ENCODE measurements at regions of chr4 and their contacts with region 1.

Region 1: GRCh38 chr4:10164877-10165283 is 48.3 kb upstream of the WDR1 start:
- DNase-seq: no peak
- ATAC-seq: no peak
- H3K4me3 ChIP-seq: no peak overlapping the region
- H3K4me3 Mint-ChIP-seq: no peak overlapping the region
- H3K27ac ChIP-seq: no peak overlapping the region
- H3K27ac Mint-ChIP-seq: peak overlapping the region in 1 of 9 donors; percentile 62
- H3K4me1 ChIP-seq: peaks cover 8 to 30% of the 10 kb centered on the region in 2 donors
- H3K4me1 Mint-ChIP-seq: peaks cover 14 to 41% (median 32%) of the 10 kb centered on the region in 7 donors
- H3K27me3 ChIP-seq: no peaks in the 10 kb centered on the region
- H3K27me3 Mint-ChIP-seq: no peaks in the 10 kb centered on the region

Region 2: DNA sequence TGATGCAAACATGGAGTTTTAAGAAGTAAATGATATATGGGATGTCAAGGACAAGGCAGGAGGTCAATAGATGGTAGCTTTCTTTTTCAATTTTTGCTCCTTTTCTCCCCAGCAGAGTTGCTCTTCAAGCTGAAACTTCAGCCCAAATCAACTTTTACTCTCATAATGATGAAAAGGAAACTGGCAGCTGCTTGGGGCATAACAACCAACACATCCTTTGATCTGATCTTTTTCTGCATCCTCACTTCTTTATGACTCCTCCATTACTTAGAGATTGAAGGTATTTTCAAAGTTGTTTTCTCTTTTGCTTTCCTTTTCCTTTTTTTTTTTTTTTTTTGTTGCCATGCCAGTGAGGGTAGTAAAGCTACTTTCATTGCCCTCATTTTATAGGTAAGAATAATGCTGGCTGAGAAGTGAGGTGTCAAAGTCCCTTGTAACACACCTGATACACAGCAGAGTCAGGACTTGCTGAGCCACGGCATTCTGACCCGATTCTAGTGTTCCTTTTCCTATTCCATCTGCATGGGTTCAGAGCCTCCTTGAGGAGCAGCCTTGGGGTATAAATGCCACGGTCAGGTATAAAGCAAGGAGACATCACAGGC is 170.5 kb before region 1 on chr4:
- CTCF ChIA-PET with region 1: no interaction called
- POLR2A ChIA-PET with region 1: no interaction called
- intact Hi-C with region 1: no loop called
- DNase-seq: peak in 5 of 9 donors; percentile 3 to 48 (median 23)
- ATAC-seq: peak; percentile 31
- H3K4me3 ChIP-seq: no peak overlapping the region
- H3K4me3 Mint-ChIP-seq: peak overlapping the region in 1 of 10 donors; percentile 4
- H3K27ac ChIP-seq: no peak overlapping the region
- H3K27ac Mint-ChIP-seq: peak overlapping the region in 5 of 9 donors; percentile 29 to 72 (median 59)
- H3K4me1 ChIP-seq: no peaks in the 10 kb centered on the region
- H3K4me1 Mint-ChIP-seq: peaks cover 8 to 38% (median 11%) of the 10 kb centered on the region in 7 donors
- H3K27me3 ChIP-seq: no peaks in the 10 kb centered on the region
- H3K27me3 Mint-ChIP-seq: no peaks in the 10 kb centered on the region

Region 3: DNA sequence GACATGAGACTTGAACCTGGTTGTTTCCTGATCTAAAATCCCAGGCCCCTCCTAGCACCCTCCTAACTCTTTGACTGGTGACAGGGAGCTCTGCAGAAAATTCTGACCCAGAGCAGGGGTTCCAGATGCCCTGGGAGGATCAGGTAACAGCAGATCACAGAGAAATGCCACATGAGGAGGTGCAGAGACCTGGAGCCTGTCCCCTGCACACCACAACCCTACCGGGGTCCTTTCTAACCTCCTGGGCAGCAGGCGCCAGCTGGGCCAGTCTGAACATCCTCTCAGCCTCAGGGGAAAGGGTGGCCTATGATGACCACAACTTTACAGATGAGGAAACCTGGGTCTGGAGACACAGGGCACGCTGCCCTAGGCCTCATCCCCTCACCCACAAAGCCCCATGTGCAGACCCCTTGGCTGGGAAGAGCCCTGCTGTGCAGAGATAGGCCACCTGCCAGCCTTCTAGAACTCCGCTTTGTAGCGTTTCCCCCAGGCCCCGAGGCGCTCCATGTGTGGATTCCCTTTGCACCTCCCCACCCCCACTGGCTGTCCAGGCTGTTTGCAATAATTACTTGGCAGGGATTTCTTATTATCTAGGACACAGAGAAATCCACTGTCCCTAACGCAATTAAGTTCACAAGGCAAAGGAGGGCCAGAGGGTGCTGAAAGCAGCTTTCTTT is 84.8 kb before region 1 on chr4:
- CTCF ChIA-PET with region 1: no interaction called
- POLR2A ChIA-PET with region 1: no interaction called
- intact Hi-C with region 1: no loop called
- DNase-seq: peak in 1 of 9 donors; percentile 8
- ATAC-seq: no peak
- H3K4me3 ChIP-seq: no peak overlapping the region
- H3K4me3 Mint-ChIP-seq: no peak overlapping the region
- H3K27ac ChIP-seq: no peak overlapping the region
- H3K27ac Mint-ChIP-seq: peak overlapping the region in 4 of 9 donors; percentile 33 to 62 (median 39)
- H3K4me1 ChIP-seq: peaks cover 0 to 3% of the 10 kb centered on the region in 2 donors
- H3K4me1 Mint-ChIP-seq: peaks cover 0 to 7% (median 0%) of the 10 kb centered on the region in 7 donors
- H3K27me3 ChIP-seq: no peaks in the 10 kb centered on the region
- H3K27me3 Mint-ChIP-seq: no peaks in the 10 kb centered on the region

Region 4: GRCh38 chr4:10180927-10181782 is 16.3 kb after region 1 on chr4:
- CTCF ChIA-PET with region 1: interaction called, 3 read pairs
- POLR2A ChIA-PET with region 1: interaction called, 3 read pairs
- intact Hi-C with region 1: loop called in 1 of 2 experiments (anchors 1 kb)
- DNase-seq: peak in 6 of 9 donors; percentile 8 to 45 (median 27)
- ATAC-seq: peak; percentile 82
- H3K4me3 ChIP-seq: no peak overlapping the region
- H3K4me3 Mint-ChIP-seq: peak overlapping the region in 2 of 10 donors; percentile 9 to 53
- H3K27ac ChIP-seq: no peak overlapping the region
- H3K27ac Mint-ChIP-seq: peak overlapping the region in 2 of 9 donors; percentile 40 to 92
- H3K4me1 ChIP-seq: peaks cover 0 to 7% of the 10 kb centered on the region in 2 donors
- H3K4me1 Mint-ChIP-seq: peaks cover 8 to 41% (median 24%) of the 10 kb centered on the region in 7 donors
- H3K27me3 ChIP-seq: no peaks in the 10 kb centered on the region
- H3K27me3 Mint-ChIP-seq: no peaks in the 10 kb centered on the region

Region 5: DNA sequence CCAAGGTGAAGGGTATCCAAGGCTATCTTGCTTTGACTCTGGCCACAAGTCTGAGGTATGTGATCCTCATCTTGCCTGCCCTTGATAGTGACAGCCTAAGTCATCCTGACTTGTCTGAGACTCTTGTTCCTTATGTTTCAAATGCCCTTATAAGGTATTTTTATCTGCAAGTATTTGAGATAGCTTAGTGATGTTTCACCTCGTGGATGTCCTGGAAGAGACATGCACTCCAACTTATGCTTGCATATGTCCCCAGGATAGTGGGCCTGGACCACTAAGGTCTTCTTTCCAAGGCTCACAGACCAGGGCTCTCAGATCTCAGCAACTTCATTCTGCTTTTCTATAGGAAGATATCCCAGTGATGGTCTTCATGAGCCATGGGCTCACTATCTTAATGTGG is 72.3 kb after region 1 on chr4:
- CTCF ChIA-PET with region 1: no interaction called
- POLR2A ChIA-PET with region 1: no interaction called
- intact Hi-C with region 1: no loop called
- DNase-seq: no peak
- ATAC-seq: no peak
- H3K4me3 ChIP-seq: no peak overlapping the region
- H3K4me3 Mint-ChIP-seq: no peak overlapping the region
- H3K27ac ChIP-seq: no peak overlapping the region
- H3K27ac Mint-ChIP-seq: no peak overlapping the region
- H3K4me1 ChIP-seq: no peaks in the 10 kb centered on the region
- H3K4me1 Mint-ChIP-seq: no peaks in the 10 kb centered on the region
- H3K27me3 ChIP-seq: no peaks in the 10 kb centered on the region
- H3K27me3 Mint-ChIP-seq: peaks cover 0 to 3% (median 0%) of the 10 kb centered on the region in 5 donors

Region 6: GRCh38 chr4:10437735-10438134 is 272.9 kb after region 1 on chr4:
- CTCF ChIA-PET with region 1: no interaction called
- POLR2A ChIA-PET with region 1: no interaction called
- intact Hi-C with region 1: no loop called
- DNase-seq: no peak
- ATAC-seq: no peak
- H3K4me3 ChIP-seq: no peak overlapping the region
- H3K4me3 Mint-ChIP-seq: no peak overlapping the region
- H3K27ac ChIP-seq: no peak overlapping the region
- H3K27ac Mint-ChIP-seq: no peak overlapping the region
- H3K4me1 ChIP-seq: no peaks in the 10 kb centered on the region
- H3K4me1 Mint-ChIP-seq: peaks cover 0 to 6% (median 0%) of the 10 kb centered on the region in 7 donors
- H3K27me3 ChIP-seq: no peaks in the 10 kb centered on the region
- H3K27me3 Mint-ChIP-seq: no peaks in the 10 kb centered on the region

Measured in naive thymus-derived CD4-positive, alpha-beta T cell (primary cell).